K562 (cell line): ENCODE measurements at regions of chr1 and their contacts with region 1.

Region 1: GRCh38 chr1:78032996-78033796 is 12.6 kb upstream of the GIPC2 start:
- DNase-seq: peak in 1 of 4 experiments; percentile 51
- ATAC-seq: peak; percentile 87
- H3K4me3 ChIP-seq: no peak overlapping the region
- H3K27ac ChIP-seq: 0 out of 3 replicates have a peak overlapping the region, but pooled peaks have one; percentile 27
- H3K4me1 ChIP-seq: peaks cover 0 to 11% of the 10 kb centered on the region in 2 experiments; a peak in 2 of 5 replicates
- H3K27me3 ChIP-seq: no peaks in the 10 kb centered on the region
- CTCF ChIP-seq: no peak
- EP300 ChIP-seq: no peak
- POLR2A ChIP-seq: no peak
- RAD21 ChIP-seq: no peak

Region 2: DNA sequence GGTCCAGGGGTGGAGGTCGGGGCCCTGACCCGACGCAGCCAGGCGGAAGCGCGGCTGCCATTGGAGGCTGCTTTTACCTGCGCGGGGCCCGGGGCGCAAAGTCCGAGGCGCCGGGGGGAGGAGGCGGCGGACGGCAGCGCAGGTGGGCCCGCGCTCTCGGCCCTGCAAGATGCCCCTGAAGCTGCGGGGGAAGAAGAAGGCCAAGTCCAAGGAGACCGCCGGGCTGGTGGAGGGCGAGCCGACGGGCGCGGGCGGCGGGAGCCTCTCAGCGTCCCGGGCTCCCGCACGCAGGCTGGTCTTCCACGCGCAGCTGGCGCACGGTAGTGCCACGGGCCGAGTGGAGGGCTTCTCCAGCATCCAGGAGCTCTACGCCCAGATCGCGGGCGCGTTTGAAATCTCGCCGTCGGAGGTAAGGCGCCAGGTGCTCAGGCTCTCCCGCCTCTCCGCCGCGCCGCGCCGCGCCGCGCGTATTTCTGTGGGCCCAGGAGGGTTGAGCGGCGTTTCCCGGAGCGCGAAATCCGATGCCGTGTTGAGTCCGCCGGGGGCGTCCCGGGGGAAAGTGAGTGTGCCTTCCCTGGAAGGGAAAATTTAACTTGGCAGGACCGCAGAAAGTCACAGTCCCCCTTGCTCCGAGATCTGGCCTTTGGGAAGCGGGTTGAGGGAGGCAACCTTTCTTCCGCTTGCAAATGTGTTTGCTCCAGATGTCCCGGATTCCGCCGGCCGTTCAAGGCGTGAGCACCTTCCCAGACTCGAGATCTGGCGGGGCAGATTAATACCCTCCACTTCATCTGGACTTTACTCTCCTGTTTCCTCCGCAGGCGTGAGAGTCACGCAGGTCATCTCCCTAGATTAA is 13.0 kb after region 1 on chr1 and contains the start of gene GIPC2:
- CTCF ChIA-PET with region 1: no interaction called
- POLR2A ChIA-PET with region 1: interaction called, 10 read pairs
- in situ Hi-C with region 1: no loop called
- intact Hi-C with region 1: no loop called
- DNase-seq: no peak
- ATAC-seq: no peak
- H3K4me3 ChIP-seq: no peak within 1 kb of the TSS
- H3K27ac ChIP-seq: no peak within 1 kb of the TSS
- H3K4me1 ChIP-seq: peaks cover 0 to 5% of the 10 kb centered on the region in 2 experiments; a peak in 1 of 5 replicates
- H3K27me3 ChIP-seq: no peaks in the 10 kb centered on the region
- CTCF ChIP-seq: no peak
- EP300 ChIP-seq: no peak
- POLR2A ChIP-seq: no peak
- RAD21 ChIP-seq: no peak
- polyA plus RNA-seq, gene GIPC2: 0.01 TPM in 1 of 2 experiments, not detected in the other